Activated CD4-positive, alpha-beta T cell treated with anti-CD3 and anti-CD28 coated beads for 36 hours (primary cell): ENCODE measurements at regions of chr1 and their contacts with region 1.

Region 1: DNA sequence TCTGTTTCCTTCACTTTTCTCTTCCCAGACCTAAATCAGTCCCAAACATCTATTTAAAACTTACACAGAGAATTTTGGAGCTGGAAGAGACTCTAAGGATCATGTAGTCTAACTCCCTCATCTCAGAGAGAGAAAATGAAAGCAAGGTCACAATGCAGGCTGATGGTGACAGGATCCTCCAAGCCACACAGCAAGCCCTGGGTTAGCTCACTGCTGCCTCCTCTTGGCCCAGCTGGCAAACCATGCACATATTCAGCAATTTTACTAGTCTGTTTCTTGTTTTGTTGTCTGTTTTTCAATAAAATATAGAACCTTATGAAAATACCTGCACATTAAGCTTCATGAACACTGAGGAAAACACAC is 27.7 kb upstream of the LY9 start:
- DNase-seq: peak; percentile 93
- ATAC-seq: peak; percentile 77
- H3K4me3 Mint-ChIP-seq: peak overlapping the region; percentile 75
- H3K27ac Mint-ChIP-seq: peak overlapping the region; percentile 99
- H3K4me1 Mint-ChIP-seq: peaks cover 44% of the 10 kb centered on the region
- H3K27me3 Mint-ChIP-seq: no peaks in the 10 kb centered on the region

Region 2: GRCh38 chr1:160428655-160429054 is 339.6 kb before region 1 on chr1:
- CTCF ChIA-PET with region 1: no interaction called
- POLR2A ChIA-PET with region 1: no interaction called
- intact Hi-C with region 1: no loop called
- DNase-seq: peak; percentile 60
- ATAC-seq: peak; percentile 51
- H3K4me3 Mint-ChIP-seq: peak overlapping the region; percentile 32
- H3K27ac Mint-ChIP-seq: peak overlapping the region; percentile 94
- H3K4me1 Mint-ChIP-seq: peaks cover 63% of the 10 kb centered on the region
- H3K27me3 Mint-ChIP-seq: no peaks in the 10 kb centered on the region

Region 3: GRCh38 chr1:160681067-160681890 is 87.0 kb before region 1 on chr1:
- CTCF ChIA-PET with region 1: interaction called, 103 read pairs
- POLR2A ChIA-PET with region 1: interaction called, 4 read pairs
- intact Hi-C with region 1: loop called (anchors 1 kb)
- DNase-seq: peak; percentile 96
- ATAC-seq: peak; percentile 76
- H3K4me3 Mint-ChIP-seq: no peak overlapping the region
- H3K27ac Mint-ChIP-seq: peak overlapping the region; percentile 94
- H3K4me1 Mint-ChIP-seq: peaks cover 78% of the 10 kb centered on the region
- H3K27me3 Mint-ChIP-seq: no peaks in the 10 kb centered on the region

Region 4: GRCh38 chr1:160711602-160712311 is 56.5 kb before region 1 on chr1 and contains the start of gene CD48:
- CTCF ChIA-PET with region 1: interaction called, 54 read pairs
- POLR2A ChIA-PET with region 1: interaction called, 5 read pairs
- intact Hi-C with region 1: loop called (anchors 1 kb)
- DNase-seq: peak; percentile 70
- ATAC-seq: peak; percentile 40
- H3K4me3 Mint-ChIP-seq: no peak within 1 kb of the TSS
- H3K27ac Mint-ChIP-seq: no peak within 1 kb of the TSS
- H3K4me1 Mint-ChIP-seq: peaks cover 34% of the 10 kb centered on the region
- H3K27me3 Mint-ChIP-seq: no peaks in the 10 kb centered on the region
- total RNA-seq, gene CD48: 180 to 217 TPM

Region 5: DNA sequence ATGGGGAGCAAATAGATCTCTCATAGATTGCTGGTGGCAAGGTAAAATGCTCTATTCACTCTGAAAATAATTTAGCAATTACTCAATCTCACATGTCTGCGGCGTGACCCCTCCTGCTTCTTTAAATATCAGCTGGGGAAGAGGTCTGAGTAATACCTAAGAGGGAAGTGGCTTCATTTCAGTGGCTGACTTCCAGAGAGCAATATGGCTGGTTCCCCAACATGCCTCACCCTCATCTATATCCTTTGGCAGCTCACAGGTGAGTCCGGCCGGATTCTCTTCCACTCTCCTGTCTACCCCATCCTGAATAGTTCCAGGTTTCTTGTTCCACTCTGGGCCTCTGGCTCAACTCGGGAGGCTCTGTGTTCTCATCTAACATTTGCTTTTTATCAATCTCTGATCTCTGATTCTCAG is 29.2 kb before region 1 on chr1 and contains the start of gene SLAMF7:
- CTCF ChIA-PET with region 1: interaction called, 26 read pairs
- POLR2A ChIA-PET with region 1: no interaction called
- intact Hi-C with region 1: no loop called
- DNase-seq: peak; percentile 61
- ATAC-seq: peak; percentile 76
- H3K4me3 Mint-ChIP-seq: peak within 1 kb of the TSS; percentile 72
- H3K27ac Mint-ChIP-seq: peak within 1 kb of the TSS; percentile 85
- H3K4me1 Mint-ChIP-seq: peaks cover 69% of the 10 kb centered on the region
- H3K27me3 Mint-ChIP-seq: no peaks in the 10 kb centered on the region
- total RNA-seq, gene SLAMF7: 35.9 to 40.3 TPM

Region 6: GRCh38 chr1:160755911-160756848 is 12.1 kb before region 1 on chr1:
- CTCF ChIA-PET with region 1: interaction called, 17 read pairs
- POLR2A ChIA-PET with region 1: no interaction called
- intact Hi-C with region 1: loop called (anchors 1 to 2 kb)
- DNase-seq: no peak
- ATAC-seq: peak; percentile 53
- H3K4me3 Mint-ChIP-seq: no peak overlapping the region
- H3K27ac Mint-ChIP-seq: peak overlapping the region; percentile 69
- H3K4me1 Mint-ChIP-seq: peaks cover 45% of the 10 kb centered on the region
- H3K27me3 Mint-ChIP-seq: no peaks in the 10 kb centered on the region

Region 7: GRCh38 chr1:160997323-160998038 is 229.2 kb after region 1 on chr1:
- CTCF ChIA-PET with region 1: no interaction called
- POLR2A ChIA-PET with region 1: no interaction called
- intact Hi-C with region 1: loop called in 1 of 2 experiments (anchors 5 kb)
- DNase-seq: peak; percentile 71
- ATAC-seq: peak; percentile 81
- H3K4me3 Mint-ChIP-seq: no peak overlapping the region
- H3K27ac Mint-ChIP-seq: peak overlapping the region; percentile 58
- H3K4me1 Mint-ChIP-seq: peaks cover 18% of the 10 kb centered on the region
- H3K27me3 Mint-ChIP-seq: no peaks in the 10 kb centered on the region